GM10248 (cell line): ENCODE measurements at regions of chr4 and their contacts with region 1.

Region 1: DNA sequence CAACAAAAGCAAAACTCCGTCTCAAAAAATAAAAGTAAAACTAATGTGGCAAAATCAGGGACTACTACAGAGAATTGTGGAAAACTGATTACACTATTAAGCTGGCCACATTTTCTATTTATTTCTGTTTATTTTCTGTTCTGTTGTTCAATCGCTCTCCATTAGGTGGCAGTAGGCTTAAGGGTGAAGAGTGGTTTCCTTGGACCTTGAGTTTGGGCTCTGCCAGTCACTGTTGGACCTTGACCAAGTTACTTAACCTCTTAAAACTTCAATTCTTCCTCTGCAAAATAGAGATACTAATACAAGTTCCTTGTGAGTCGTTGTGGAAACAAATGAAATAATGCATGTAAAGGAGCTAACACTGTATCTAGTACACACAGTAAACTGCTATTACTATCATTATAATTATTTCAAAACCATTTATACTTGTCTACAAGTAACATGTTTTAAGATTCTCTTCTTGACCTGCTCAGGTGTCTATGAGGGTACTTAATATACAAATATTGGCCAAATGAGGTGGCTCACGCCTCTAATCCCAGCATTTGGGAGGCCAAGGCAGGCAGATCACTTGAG is 15.2 kb downstream of the HSD17B11 start:
- DNase-seq: peak; percentile 34
- CTCF ChIP-seq: peak; percentile 41

Region 2: DNA sequence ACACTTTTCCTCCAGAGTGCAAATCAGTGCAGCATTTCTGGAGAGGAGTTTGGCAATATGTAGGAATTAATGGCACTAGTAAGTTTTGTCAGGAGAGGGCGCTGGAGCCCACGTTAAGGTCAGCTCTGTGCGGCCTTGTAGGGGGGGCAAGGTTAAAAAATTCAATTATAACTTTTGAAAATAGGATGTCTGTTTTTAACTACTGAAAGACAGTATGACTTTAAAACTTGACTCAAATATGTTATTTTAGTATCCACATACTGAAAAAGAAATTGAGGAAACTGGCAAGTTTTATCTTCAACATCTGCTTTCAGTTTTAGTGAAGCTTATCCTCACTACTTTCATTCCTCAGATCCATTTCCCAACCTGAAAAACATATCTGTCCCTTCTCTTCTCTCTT is 22.2 kb before region 1 on chr4:
- CTCF ChIA-PET with region 1: interaction called, 14 read pairs
- POLR2A ChIA-PET with region 1: no interaction called
- DNase-seq: peak; percentile 51
- CTCF ChIP-seq: peak; percentile 66

Region 3: GRCh38 chr4:87363567-87363966 is 12.2 kb before region 1 on chr4:
- CTCF ChIA-PET with region 1: interaction called, 15 read pairs
- POLR2A ChIA-PET with region 1: no interaction called
- DNase-seq: no peak
- CTCF ChIP-seq: no peak

Region 4: DNA sequence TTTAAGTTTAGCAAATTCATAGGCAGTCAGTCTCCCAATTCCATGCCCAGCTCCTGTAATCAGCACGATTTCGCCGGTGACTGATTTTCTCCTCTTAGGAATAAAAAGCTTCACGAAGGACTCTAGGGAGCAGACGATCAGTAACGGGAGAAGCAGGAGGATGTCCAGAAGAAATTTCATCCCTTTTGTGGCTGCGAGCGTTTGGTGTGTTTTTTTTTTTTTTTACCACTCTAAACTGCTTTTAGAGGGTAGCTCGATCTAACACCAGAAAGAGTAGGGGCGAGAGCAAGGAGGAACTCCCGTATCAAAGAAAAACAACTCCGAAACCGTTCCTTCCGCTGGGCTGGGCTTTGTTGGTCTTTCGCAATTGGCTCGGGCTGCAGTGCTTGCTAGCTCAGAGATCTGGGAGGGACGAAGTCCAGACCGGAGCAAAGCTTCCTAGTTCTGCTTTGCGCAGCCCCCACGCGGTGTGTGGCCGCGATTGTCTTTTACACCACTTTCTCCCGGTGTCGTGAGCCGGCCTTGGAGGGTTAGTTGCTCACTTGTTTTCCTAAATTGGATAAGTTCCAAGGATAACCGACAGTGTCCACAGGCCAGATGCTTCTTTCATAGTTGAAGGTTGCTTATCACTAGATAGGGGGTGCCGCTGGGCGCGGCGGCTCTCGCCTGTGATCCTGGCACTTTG is 15.2 kb after region 1 on chr4 and contains the start of gene HSD17B11:
- CTCF ChIA-PET with region 1: interaction called, 43 read pairs
- POLR2A ChIA-PET with region 1: interaction called, 5 read pairs
- DNase-seq: peak; percentile 94
- CTCF ChIP-seq: no peak

Region 5: DNA sequence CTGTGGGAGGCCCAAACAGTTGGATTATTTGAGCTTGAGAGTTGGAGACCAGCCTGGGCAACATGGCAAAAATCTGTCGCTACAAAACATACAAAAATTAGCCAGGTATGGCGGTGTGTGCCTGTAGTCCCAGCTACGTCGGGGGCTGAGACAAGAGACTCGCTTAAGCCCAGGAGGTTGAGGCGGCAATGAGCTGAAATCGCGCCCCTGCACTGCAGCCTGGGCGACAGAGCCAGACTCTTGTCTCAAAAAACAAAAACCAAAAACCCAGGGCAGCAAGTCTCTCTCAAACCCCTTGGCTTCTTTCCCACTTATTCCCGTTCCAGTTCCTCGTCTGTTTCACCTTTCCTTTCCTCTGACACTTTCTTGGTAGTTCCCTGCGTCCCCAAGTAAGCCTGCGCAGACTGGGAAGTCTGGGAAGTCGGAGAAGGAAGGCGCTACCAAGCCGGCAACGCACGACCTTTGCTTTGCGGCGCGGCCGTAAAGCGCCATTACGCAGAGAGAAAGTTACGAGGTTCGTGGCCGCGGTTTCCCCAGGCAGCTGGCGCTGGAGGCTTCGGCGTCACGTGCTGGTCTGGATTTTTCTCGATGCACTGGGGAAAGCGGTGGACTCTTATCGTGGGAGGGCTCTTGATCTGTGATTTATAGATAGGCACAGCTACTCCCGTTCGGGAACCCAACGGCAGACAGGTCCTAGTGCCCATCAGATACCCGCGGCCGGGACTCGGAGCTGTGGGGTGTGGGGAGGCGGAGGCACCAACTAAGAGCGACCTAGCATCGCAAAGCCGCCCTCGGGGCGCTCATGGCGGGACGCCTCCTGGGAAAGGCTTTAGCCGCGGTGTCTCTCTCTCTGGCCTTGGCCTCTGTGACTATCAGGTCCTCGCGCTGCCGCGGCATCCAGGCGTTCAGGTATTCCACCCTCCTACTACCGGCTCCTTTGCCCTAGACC is 46.6 kb after region 1 on chr4 and contains the start of gene NUDT9:
- CTCF ChIA-PET with region 1: interaction called, 15 read pairs
- POLR2A ChIA-PET with region 1: no interaction called
- DNase-seq: peak; percentile 87
- CTCF ChIP-seq: no peak

Region 6: GRCh38 chr4:87465739-87466366 is 90.0 kb after region 1 on chr4:
- CTCF ChIA-PET with region 1: interaction called, 15 read pairs
- POLR2A ChIA-PET with region 1: no interaction called
- DNase-seq: peak; percentile 47
- CTCF ChIP-seq: peak; percentile 40

Region 7: GRCh38 chr4:87589522-87589921 is 213.7 kb after region 1 on chr4:
- CTCF ChIA-PET with region 1: no interaction called
- POLR2A ChIA-PET with region 1: no interaction called
- DNase-seq: no peak
- CTCF ChIP-seq: no peak